Cardiac septum (tissue), 1 donor: ENCODE measurements at regions of chr12 and their contacts with region 1.

Region 1: DNA sequence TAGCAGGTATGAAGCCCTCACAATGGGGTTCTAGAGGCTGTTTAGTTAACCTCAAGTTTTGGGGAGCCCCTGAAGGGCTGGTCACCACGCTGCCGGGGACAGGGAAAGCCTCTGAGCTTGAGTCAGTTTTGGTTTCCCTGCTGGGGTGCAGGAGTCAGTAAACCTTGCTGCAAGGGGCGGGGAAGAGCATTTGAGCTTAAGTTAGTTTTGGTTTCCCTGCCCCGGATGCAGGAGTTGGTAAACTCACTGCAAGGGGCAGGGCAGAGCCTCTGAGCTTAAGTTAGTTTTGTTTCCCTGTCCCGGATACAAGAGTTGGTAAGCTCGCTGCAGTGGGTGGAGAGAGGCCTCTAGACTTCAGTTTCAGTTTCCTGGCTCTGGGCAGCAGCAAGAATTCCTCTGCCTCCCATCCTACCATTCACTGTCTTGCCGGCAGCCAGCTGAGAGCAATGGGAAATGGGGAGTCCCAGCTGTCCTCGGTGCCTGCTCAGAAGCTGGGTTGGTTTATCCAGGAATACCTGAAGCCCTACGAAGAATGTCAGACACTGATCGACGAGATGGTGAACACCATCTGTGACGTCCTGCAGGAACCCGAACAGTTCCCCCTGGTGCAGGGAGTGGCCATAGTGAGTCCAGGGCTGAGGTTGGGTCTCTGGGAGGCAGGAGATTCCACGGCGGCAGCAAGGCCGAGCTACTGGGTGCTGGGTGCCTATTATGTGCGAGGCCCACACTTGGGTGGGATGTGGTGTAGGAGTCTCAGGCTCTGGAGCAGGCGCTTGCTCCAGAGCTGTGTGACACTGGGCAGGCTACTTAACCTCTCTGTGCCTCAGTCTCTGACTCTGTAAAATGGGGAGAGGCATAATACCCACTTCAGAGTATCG is at the start of gene OAS2:
- DNase-seq: peak; percentile 78
- total RNA-seq, gene OAS2: 6.4 TPM

Region 2: GRCh38 chr12:112906712-112907414 is 71.5 kb before region 1 on chr12 and contains the start of gene OAS1:
- intact Hi-C with region 1: loop called (anchors 5 kb)
- DNase-seq: no peak
- total RNA-seq, gene OAS1: 4.0 TPM

Region 3: DNA sequence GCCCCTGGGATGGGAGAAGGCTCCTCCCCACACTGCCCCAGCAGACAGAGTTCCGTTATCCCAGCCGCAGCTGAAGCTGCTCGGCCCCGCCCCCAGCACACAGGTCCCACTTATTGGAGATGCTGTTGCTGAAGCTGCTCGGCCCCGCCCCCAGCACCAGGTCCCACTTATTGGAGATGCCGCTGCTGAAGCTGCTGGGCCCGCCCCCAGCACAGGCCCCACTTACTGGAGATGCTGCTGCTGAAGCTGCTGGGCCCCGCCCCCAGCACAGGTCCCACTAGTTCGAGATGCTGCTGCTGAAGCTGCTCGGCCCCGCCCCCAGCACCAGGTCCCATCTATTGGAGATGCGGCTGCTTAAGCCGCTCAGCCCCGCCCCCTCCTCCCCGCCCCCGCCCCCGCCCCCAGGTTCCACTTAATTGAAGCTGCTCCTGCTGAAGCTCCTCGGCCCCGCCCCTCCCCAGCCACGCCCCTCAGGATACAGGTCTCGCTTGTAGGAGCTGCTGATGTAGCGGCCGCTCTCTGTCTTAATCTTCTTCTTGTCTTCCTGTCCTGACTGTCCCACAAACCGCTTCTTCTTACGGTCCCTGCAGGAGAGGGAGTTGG is 183.1 kb after region 1 on chr12:
- intact Hi-C with region 1: no loop called
- DNase-seq: no peak